PC-3 (cell line): ENCODE measurements at regions of chr11 and their contacts with region 1.

Region 1: DNA sequence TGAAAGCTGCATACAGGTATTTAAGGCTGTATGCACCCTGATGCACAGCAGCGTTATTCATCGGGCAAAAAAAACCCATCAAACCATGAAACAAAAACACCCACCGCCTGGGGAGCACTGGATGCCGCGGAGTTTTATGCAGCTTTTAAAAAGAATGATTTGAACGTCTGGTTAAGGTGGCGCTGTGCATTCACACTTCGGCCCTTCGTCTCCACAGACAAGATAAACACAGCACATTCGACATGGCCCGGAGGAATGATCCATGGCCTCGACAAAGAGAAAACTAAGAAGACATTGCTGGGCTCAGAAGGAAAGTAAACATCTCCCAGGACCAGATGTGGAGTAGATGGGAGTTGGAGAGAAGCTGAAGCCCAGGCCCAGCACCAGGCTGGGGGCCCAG is 40.8 kb upstream of the GAL start:
- DNase-seq: peak; percentile 49
- ATAC-seq: peak; percentile 66
- H3K4me3 ChIP-seq: no peak overlapping the region
- H3K27ac ChIP-seq: no peak overlapping the region
- H3K4me1 ChIP-seq: no peaks in the 10 kb centered on the region
- H3K27me3 ChIP-seq: peaks cover 21% of the 10 kb centered on the region; the same call in 1 of the 2 replicates
- CTCF ChIP-seq: peak; percentile 52

Region 2: DNA sequence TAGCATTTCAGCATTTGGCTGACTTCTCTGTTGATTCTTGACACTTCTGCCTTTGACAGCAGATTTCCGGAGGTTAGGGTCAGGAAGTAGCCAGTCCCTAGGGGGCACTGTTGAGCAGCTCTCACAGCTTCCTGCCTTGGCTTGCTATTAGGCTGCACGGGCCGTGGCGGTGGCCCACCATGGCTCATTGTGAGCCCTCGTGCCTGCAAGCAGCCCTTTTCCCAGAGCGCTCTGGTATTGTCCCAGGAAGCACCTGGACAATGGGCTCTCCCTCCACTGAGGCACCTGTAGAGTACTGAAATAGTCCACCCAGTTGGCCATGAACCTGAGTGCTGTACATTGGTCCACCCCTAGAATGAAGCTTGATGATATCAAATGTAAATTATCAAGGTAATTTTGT is 59.5 kb before region 1 on chr11:
- CTCF ChIA-PET with region 1: no interaction called
- POLR2A ChIA-PET with region 1: no interaction called
- intact Hi-C with region 1: no loop called
- DNase-seq: peak; percentile 54
- ATAC-seq: no peak
- H3K4me3 ChIP-seq: no peak overlapping the region
- H3K27ac ChIP-seq: no peak overlapping the region
- H3K4me1 ChIP-seq: peaks cover 12% of the 10 kb centered on the region
- H3K27me3 ChIP-seq: no peaks in the 10 kb centered on the region
- CTCF ChIP-seq: peak; percentile 90

Region 3: DNA sequence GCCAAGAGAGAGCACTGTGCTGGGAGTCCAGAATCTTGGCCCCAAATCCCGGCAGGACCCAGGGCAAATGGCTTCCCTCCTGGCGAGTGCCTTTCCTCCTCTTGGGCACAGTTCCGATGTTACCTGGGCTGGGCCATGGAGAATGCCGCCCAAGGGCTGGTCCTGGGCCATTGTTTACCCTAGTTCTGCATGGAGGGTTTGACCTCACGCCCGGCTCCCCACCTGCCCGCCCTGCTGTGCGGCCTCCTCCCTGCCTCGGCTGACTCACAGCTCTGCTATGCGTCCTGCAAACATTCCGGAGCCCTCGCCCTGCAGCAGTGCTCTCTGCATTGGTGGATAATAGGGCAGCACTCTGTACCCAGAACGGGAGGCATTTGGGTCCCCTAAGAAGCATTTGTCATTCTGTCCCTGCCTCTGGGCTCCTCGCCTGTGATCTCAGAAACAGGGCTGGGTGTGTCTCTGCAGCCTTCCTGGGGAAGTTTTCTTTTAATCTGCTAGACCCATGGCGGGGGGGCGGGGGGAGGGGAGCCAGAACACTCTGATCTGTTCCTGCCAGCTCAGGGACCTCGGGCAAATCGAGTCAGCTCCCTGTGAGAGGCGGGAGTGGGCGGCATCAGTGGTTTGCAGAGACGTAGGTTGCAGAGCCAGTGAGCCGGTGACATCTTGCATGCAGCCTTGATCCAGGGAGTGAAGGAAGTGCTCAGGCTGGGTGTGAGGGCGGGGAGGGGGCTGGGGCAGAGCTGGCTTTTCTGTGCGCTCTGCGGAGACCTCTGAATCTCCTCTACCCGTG is 479.3 kb after region 1 on chr11:
- CTCF ChIA-PET with region 1: no interaction called
- POLR2A ChIA-PET with region 1: no interaction called
- intact Hi-C with region 1: no loop called
- DNase-seq: peak; percentile 100
- ATAC-seq: peak; percentile 94
- H3K4me3 ChIP-seq: peak overlapping the region; percentile 41
- H3K27ac ChIP-seq: peak overlapping the region; percentile 97
- H3K4me1 ChIP-seq: peaks cover 32% of the 10 kb centered on the region
- H3K27me3 ChIP-seq: no peaks in the 10 kb centered on the region
- CTCF ChIP-seq: no peak

Region 4: DNA sequence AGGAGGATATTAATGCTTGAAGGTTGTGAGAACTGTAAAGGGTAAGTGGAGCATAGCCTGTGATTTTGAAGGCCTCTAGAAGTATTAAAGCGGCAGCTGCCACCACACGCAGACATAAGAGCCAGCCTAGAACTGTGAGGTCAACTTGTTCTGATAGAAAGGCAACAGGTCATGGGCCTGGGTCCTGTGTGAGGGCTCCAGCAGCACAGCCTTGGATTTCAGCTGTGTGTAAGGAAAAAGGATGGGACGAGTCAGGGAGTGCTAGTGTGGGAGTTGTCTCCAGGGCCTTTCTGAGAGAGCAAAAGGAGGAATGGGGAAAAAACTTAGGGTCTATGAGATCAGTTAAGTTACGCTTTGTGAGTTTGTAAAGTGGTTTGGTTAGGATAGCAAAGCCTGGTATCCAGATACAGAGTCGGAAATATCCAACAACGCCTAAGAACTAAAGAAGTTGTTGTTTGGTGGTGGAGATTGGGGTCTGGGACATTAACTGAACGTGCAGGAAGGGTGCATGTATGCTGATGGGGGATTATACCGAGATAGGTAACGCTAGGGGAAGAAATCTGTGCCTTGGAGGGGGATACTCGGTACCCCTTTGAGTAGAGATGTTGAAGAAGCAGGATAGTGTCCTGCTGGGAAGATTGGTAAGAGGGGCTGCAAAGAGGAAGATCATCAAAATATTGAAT is 1417.2 kb after region 1 on chr11:
- CTCF ChIA-PET with region 1: no interaction called
- POLR2A ChIA-PET with region 1: interaction called, 15 read pairs
- intact Hi-C with region 1: no loop called
- DNase-seq: no peak
- ATAC-seq: no peak
- H3K4me3 ChIP-seq: no peak overlapping the region
- H3K27ac ChIP-seq: no peak overlapping the region
- H3K4me1 ChIP-seq: peaks cover 32% of the 10 kb centered on the region
- H3K27me3 ChIP-seq: no peaks in the 10 kb centered on the region
- CTCF ChIP-seq: no peak